Mammary epithelial cell (primary cell): ENCODE measurements at regions of chr7 and their contacts with region 1.

Region 1: GRCh38 chr7:2209146-2209960 is 23.4 kb downstream of the MAD1L1 start:
- DNase-seq: peak; percentile 11
- H3K4me3 ChIP-seq: no peak overlapping the region
- H3K27ac ChIP-seq: no peak overlapping the region
- H3K4me1 ChIP-seq: peaks cover 5% of the 10 kb centered on the region
- H3K27me3 ChIP-seq: no peaks in the 10 kb centered on the region
- CTCF ChIP-seq: peak; percentile 61 to 75

Region 2: DNA sequence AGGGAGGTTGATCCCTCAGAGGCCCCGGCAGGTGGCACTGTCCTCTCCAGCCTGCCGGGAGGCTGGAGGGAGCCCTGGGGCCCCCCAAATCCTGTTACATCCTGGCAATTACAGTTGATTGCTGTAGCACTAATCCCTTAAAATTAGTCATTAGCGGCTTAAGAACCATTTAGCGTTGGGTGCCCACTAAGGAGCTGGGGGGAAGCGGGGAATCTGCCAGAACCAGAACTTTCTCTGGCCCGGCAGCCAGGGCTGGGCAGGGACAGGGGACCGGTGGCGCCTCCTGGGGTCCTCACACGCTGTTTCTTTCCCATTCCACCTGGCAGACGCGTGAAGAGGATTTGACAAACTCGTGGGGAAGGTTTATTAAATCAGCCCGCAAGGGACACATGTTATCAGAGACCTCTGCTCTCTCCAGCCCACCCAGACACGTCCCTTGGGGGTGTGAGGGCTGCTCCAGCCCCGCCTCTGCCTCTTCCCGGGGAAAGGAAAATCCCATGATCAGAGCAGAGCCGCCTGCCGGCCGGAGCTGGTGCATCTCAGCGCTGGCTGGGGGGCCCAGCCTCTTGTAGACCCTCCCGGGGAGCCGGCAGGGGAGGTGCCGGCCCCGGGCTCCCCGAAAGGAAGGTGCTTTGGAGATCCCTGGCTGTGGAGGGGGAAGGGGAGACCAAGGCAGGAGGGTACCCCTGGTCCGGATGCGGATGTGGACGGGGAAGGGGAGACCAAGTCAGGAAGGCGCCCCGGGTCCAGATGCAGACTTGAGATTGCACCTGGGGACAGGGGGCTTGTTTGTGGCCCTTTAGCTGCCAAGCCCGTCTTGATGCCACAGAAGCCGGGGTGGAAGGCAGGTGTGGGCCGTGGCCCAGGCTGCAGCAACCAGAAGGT is 396.6 kb before region 1 on chr7:
- CTCF ChIA-PET with region 1: no interaction called
- dilution Hi-C with region 1: no loop called
- in situ Hi-C with region 1: no loop called
- intact Hi-C with region 1: loop called (anchors 5 kb)
- DNase-seq: peak; percentile 8
- H3K4me3 ChIP-seq: no peak overlapping the region
- H3K27ac ChIP-seq: no peak overlapping the region
- H3K4me1 ChIP-seq: no peaks in the 10 kb centered on the region
- H3K27me3 ChIP-seq: no peaks in the 10 kb centered on the region
- CTCF ChIP-seq: peak; percentile 1 to 67

Region 3: DNA sequence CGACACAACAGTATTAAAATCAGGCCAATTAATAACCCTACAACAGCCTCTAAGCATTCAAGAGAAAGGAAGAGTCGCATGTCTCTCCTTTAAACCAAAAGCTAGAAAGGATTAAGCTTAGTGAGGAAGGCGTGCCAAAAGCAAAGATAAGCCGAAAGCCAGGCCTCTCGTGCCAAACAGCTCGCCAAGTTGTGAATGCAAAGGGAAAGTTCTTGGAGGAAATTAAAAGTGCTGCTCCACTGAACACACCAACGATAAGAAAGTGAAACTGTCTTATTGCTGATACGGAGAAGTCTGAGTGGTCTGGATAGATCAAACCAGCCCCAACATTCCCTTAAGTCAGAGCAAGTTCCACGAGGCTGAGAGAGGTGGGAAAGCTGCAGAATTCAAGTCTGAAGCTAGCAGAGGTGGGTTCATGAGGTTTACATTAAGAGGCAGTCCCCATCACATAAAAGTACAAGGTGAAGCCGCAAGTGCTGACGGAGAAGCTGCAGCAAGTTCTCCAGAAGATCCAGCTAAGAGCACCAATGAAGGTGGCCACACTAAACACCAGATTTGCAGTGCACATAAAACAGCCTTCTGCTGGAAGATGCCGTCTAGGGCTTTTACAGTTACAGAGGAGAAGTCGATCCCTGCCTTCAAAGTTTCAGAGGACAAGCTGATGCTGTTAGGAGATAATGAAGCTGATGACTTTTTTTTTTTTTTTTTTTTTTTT is 171.4 kb before region 1 on chr7:
- CTCF ChIA-PET with region 1: no interaction called
- dilution Hi-C with region 1: loop called (anchors 5 kb)
- in situ Hi-C with region 1: no loop called
- intact Hi-C with region 1: no loop called
- DNase-seq: no peak
- H3K4me3 ChIP-seq: no peak overlapping the region
- H3K27ac ChIP-seq: no peak overlapping the region
- H3K4me1 ChIP-seq: peaks cover 8% of the 10 kb centered on the region
- H3K27me3 ChIP-seq: no peaks in the 10 kb centered on the region
- CTCF ChIP-seq: no peak

Region 4: DNA sequence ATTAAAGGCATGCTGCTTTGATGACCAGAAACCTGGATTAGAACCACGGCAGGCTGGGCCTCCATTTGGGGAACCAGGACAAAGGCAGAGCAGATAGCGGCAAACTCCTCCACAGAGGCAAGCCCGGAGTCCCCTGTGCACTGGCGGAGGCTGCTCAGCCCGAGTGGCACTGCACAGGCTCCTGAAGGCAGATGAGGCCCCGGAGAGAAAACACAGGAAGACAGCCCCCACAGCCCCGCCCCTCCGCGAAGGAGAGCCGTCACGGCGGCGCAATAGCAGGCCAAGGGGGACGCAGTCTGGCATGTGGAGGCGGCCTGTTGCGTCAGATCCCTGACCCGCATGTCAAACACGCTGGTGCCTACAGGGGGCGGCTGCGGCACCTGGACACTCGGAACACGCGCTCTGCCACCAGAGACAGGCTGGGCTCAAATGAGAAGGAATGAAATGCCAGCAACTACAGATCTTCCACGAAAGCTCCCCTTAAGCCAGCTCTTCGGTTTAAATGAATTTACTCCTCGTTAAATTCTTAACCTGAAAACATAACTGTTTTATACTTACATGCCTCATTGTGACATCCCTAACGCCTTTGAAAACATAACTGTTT is 105.1 kb before region 1 on chr7:
- CTCF ChIA-PET with region 1: no interaction called
- dilution Hi-C with region 1: no loop called
- in situ Hi-C with region 1: no loop called
- intact Hi-C with region 1: no loop called
- DNase-seq: no peak
- H3K4me3 ChIP-seq: no peak overlapping the region
- H3K27ac ChIP-seq: no peak overlapping the region
- H3K4me1 ChIP-seq: peaks cover 23% of the 10 kb centered on the region
- H3K27me3 ChIP-seq: no peaks in the 10 kb centered on the region
- CTCF ChIP-seq: peak; percentile 30 to 51

Region 5: DNA sequence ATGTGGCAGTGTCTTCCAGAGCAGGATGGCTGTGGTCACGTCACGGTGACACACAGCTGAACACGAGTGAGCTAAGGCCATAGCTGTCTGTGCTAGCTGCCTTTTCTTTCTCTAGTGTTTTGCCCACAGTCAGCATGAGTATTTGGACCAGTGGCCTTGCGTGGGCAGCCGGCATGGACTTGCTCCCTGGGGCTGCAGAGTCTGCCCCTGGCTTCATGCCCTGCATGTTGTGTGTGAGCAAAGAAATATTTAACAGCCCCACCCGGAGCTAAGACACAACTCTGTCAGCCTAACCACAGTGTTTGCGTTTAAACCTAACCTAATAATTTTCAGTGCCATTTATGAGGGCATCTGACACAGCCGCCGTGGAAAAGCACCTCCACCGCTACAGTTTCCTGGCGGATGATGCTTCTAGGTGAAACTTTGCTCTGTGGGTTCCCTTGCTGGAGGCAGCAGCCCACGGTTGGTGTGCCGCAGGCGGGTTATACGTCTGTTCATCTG is 208.7 kb after region 1 on chr7:
- CTCF ChIA-PET with region 1: no interaction called
- dilution Hi-C with region 1: no loop called
- in situ Hi-C with region 1: no loop called
- intact Hi-C with region 1: no loop called
- DNase-seq: peak; percentile 35
- H3K4me3 ChIP-seq: no peak overlapping the region
- H3K27ac ChIP-seq: no peak overlapping the region
- H3K4me1 ChIP-seq: peaks cover 7% of the 10 kb centered on the region
- H3K27me3 ChIP-seq: no peaks in the 10 kb centered on the region
- CTCF ChIP-seq: no peak

Region 6: GRCh38 chr7:2641406-2642393 is 432.3 kb after region 1 on chr7:
- CTCF ChIA-PET with region 1: no interaction called
- dilution Hi-C with region 1: no loop called
- in situ Hi-C with region 1: no loop called
- intact Hi-C with region 1: no loop called
- DNase-seq: peak; percentile 76
- H3K4me3 ChIP-seq: no peak overlapping the region
- H3K27ac ChIP-seq: no peak overlapping the region
- H3K4me1 ChIP-seq: peaks cover 22% of the 10 kb centered on the region
- H3K27me3 ChIP-seq: no peaks in the 10 kb centered on the region
- CTCF ChIP-seq: no peak